ENCODE measurements at regions of chr5 and their contacts with region 1.

Region 1: DNA sequence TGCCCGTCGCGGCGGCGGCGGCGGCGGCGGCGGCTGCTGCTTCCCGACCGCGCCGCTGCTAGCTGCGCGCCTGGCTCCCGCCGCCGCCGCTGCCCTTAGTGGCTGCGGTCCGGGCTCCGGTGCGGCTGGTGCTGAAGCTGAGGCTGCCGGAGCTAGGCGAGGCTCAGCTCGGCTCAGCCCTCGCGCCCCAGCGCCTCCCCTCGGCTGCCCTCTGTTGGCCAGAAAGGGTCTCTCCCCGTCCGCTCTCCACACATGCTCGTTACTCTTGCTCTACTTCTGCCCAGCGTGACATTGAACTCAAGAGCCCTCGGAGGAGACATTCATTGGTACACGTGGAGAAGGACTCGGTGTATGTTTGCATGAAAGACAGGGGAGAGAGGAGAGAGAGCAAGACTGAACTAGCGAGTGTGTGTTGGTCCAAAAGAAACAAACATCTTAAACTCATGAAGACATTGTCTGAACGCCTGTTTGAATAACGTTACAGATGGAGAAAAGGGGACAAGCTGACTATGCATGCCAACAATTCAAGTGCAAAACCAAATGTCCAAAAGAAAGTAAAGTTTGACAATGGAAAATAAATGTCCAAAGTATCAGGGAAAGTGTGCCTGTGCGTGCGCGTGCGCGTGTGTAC is at the start of gene HCN1:
- DNase-seq: peak; percentile 81
- H3K4me3 Mint-ChIP-seq: no peak within 1 kb of the TSS
- H3K27ac Mint-ChIP-seq: no peak within 1 kb of the TSS
- H3K4me1 Mint-ChIP-seq: peaks cover 2% of the 10 kb centered on the region
- H3K27me3 Mint-ChIP-seq: peaks cover 16% of the 10 kb centered on the region
- total RNA-seq, gene HCN1: not detected in 2 replicates

Region 2: DNA sequence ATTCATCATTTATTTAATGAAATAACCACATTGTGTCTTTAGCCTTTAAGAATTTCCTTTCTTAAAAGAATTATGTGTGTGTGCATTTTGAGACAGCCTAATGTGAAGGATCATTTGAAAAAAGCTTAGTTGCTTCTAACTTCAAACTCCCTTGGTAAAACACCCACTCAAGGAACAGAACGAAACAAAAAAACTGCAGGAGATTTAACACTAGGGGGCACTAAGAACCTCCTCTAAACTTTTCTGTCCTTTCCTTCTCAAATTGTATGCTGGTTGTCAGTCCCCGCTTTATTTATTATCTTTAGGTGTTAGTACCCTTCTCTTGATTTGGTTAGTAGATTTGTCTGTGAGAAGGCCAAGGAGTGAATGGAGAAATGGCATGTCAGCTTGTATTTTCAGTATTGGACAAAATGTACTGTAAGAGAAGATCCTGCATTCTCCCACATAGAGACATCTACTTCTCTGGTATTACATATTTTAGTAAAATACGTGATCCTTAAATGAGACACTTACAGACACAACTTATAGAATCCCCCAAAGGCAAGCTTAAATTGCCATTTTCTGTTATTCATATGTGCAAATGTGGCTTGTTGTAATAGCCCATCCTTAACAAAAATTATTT is 657.8 kb before region 1 on chr5:
- intact Hi-C with region 1: loop called (anchors 2 kb)
- DNase-seq: no peak
- H3K4me3 Mint-ChIP-seq: no peak overlapping the region
- H3K27ac Mint-ChIP-seq: no peak overlapping the region
- H3K4me1 Mint-ChIP-seq: no peaks in the 10 kb centered on the region
- H3K27me3 Mint-ChIP-seq: no peaks in the 10 kb centered on the region

Region 3: GRCh38 chr5:45623855-45624254 is 72.5 kb before region 1 on chr5:
- intact Hi-C with region 1: no loop called
- DNase-seq: no peak
- H3K4me3 Mint-ChIP-seq: no peak overlapping the region
- H3K27ac Mint-ChIP-seq: no peak overlapping the region
- H3K4me1 Mint-ChIP-seq: no peaks in the 10 kb centered on the region
- H3K27me3 Mint-ChIP-seq: no peaks in the 10 kb centered on the region

Region 4: DNA sequence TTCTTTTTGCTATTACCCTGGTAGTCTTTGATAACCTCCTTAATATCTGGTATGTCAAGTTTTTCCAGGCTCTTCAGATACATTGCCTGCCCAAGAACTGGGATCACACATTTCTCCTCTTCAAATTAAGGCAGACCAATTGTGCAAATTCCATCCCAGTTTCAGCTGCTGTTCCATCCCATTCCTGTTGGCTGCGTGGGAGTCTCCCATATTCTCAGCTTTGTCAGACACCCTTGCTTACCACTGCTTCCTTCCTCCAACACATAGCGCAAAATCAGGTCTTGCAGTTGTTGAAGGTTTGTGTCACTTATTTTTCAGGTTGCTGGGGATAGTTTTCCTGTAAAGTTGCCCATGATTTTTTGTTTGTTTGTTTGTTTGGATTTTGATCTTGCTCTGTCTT is 15.4 kb before region 1 on chr5:
- intact Hi-C with region 1: no loop called
- DNase-seq: no peak
- H3K4me3 Mint-ChIP-seq: no peak overlapping the region
- H3K27ac Mint-ChIP-seq: no peak overlapping the region
- H3K4me1 Mint-ChIP-seq: no peaks in the 10 kb centered on the region
- H3K27me3 Mint-ChIP-seq: no peaks in the 10 kb centered on the region

Region 5: DNA sequence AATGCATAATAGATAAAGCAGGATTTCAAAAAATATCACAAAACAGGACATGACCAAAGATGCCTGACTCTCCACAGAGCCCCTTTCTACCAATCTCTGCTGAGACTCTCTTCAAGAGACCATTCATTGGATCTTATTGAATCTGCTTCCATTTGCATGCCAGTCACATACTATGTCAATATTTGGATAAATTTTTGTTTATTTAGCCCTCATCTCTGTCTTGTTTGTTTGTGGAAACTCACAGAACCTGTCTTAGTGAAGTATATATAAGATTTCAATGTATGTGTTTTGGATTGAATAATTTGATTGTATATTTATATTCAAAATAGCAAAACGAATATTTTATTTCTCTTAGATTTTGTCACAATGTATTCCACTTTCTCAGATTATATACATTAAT is 173.3 kb after region 1 on chr5:
- intact Hi-C with region 1: no loop called
- DNase-seq: no peak
- H3K4me3 Mint-ChIP-seq: no peak overlapping the region
- H3K27ac Mint-ChIP-seq: no peak overlapping the region
- H3K4me1 Mint-ChIP-seq: no peaks in the 10 kb centered on the region
- H3K27me3 Mint-ChIP-seq: no peaks in the 10 kb centered on the region

Region 6: DNA sequence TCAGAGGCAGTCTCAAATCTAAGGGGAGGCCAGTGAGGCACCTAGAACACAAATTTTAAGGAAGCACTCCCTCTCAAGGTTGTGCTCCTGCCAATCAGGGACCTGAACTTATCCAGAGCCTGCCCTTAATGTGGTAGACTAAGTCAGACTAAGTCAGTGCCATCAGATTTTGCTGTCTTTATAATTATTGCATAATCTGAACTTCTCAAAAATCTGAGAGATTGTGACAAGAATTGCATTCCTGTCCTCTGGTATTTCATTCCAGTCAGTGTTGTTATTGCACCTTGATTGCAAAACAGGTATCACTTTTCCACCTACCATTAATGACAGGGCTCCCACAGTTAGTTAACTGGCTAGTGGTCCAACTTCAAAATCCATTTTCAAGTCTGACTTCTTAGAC is 197.0 kb after region 1 on chr5:
- intact Hi-C with region 1: no loop called
- DNase-seq: no peak
- H3K4me3 Mint-ChIP-seq: no peak overlapping the region
- H3K27ac Mint-ChIP-seq: no peak overlapping the region
- H3K4me1 Mint-ChIP-seq: no peaks in the 10 kb centered on the region
- H3K27me3 Mint-ChIP-seq: no peaks in the 10 kb centered on the region

Measured in activated CD4-positive, alpha-beta T cell treated with anti-CD3 and anti-CD28 coated beads, Interleukin-2, amount 10 ng/mL, durations not matched to agents 24 days and 14 days (primary cell).